Gastrocnemius medialis (tissue), 4 donors: ENCODE measurements at regions of chr2 and their contacts with region 1.

Region 1: GRCh38 chr2:19738707-19739106 is 163.1 kb downstream of the TTC32 start:
- DNase-seq: peak; percentile 77 to 82
- ATAC-seq: peak; percentile 76 to 88
- H3K4me3 ChIP-seq: peak overlapping the region in 1 of 4 donors; percentile 6
- H3K27ac ChIP-seq: peak overlapping the region; percentile 80 to 88 (median 81)
- H3K4me1 ChIP-seq: peaks cover 38 to 51% of the 10 kb centered on the region in 2 donors
- H3K27me3 ChIP-seq: no peaks in the 10 kb centered on the region
- CTCF ChIP-seq: no peak
- POLR2A ChIP-seq: no peak

Region 2: DNA sequence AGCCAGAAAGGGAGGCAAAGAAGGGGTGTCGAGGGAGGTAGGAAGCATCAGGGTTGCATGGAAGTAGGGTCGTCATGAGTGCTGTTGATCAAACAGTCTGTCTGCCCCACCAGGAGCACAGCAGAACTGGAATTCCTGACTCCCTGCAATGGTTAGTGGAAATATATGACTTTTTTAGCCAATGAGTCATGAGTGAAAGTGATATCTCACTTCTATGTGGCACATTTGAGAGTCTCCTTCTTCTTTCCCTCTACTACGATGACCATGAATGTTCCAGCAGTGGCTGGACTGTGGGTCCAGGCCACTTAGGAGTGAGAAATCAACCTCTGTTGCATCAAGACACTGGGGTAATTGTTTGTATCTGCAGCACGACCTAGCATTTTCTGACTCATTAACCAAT is 36.4 kb before region 1 on chr2:
- in situ Hi-C with region 1: no loop called
- intact Hi-C with region 1: loop called (anchors 2 kb)
- DNase-seq: no peak
- ATAC-seq: peak; percentile 94
- H3K4me3 ChIP-seq: no peak overlapping the region
- H3K27ac ChIP-seq: peak overlapping the region in 3 of 4 donors; percentile 32 to 48 (median 46)
- H3K4me1 ChIP-seq: peaks cover 17% of the 10 kb centered on the region in 2 donors
- H3K27me3 ChIP-seq: no peaks in the 10 kb centered on the region
- CTCF ChIP-seq: no peak
- POLR2A ChIP-seq: no peak

Region 3: GRCh38 chr2:19801367-19802080 is 62.8 kb after region 1 on chr2:
- in situ Hi-C with region 1: no loop called
- intact Hi-C with region 1: loop called (anchors 1 kb)
- DNase-seq: peak; percentile 94 to 98
- ATAC-seq: peak; percentile 83 to 93
- H3K4me3 ChIP-seq: no peak overlapping the region
- H3K27ac ChIP-seq: peak overlapping the region; percentile 75 to 89 (median 82)
- H3K4me1 ChIP-seq: peaks cover 15 to 25% of the 10 kb centered on the region in 2 donors
- H3K27me3 ChIP-seq: no peaks in the 10 kb centered on the region
- CTCF ChIP-seq: no peak
- POLR2A ChIP-seq: no peak

Region 4: DNA sequence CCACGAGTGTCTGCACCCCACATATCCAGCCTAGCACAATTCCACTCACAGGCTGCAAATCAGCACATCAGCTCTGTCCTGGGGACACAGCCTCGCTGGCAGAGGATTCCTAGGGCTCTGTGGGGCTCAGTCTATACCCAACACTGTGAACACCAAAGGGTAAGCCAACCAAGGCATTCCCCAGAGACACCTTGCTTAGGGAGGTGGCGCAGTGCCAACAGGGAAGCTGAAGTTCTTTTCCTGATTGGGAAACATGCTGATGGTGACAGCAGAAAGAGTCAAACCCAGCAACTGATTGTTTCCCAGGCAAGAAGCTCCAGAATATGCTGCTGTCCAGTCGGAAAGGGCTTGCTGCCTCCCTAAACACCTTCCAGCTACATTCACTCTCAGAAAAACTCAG is 107.3 kb after region 1 on chr2:
- in situ Hi-C with region 1: no loop called
- intact Hi-C with region 1: no loop called
- DNase-seq: no peak
- ATAC-seq: no peak
- H3K4me3 ChIP-seq: no peak overlapping the region
- H3K27ac ChIP-seq: no peak overlapping the region
- H3K4me1 ChIP-seq: no peaks in the 10 kb centered on the region
- H3K27me3 ChIP-seq: no peaks in the 10 kb centered on the region
- CTCF ChIP-seq: no peak
- POLR2A ChIP-seq: no peak

Region 5: GRCh38 chr2:20027705-20028434 is 289.2 kb after region 1 on chr2:
- in situ Hi-C with region 1: no loop called
- intact Hi-C with region 1: no loop called
- DNase-seq: no peak
- ATAC-seq: no peak
- H3K4me3 ChIP-seq: no peak overlapping the region
- H3K27ac ChIP-seq: no peak overlapping the region
- H3K4me1 ChIP-seq: peaks cover 4 to 10% of the 10 kb centered on the region in 2 donors
- H3K27me3 ChIP-seq: no peaks in the 10 kb centered on the region
- CTCF ChIP-seq: no peak
- POLR2A ChIP-seq: no peak